Activated B cell treated with CpG ODN at 0.5 μM for 24 hours (primary cell): ENCODE measurements at regions of chr6 and their contacts with region 1.

Region 1: DNA sequence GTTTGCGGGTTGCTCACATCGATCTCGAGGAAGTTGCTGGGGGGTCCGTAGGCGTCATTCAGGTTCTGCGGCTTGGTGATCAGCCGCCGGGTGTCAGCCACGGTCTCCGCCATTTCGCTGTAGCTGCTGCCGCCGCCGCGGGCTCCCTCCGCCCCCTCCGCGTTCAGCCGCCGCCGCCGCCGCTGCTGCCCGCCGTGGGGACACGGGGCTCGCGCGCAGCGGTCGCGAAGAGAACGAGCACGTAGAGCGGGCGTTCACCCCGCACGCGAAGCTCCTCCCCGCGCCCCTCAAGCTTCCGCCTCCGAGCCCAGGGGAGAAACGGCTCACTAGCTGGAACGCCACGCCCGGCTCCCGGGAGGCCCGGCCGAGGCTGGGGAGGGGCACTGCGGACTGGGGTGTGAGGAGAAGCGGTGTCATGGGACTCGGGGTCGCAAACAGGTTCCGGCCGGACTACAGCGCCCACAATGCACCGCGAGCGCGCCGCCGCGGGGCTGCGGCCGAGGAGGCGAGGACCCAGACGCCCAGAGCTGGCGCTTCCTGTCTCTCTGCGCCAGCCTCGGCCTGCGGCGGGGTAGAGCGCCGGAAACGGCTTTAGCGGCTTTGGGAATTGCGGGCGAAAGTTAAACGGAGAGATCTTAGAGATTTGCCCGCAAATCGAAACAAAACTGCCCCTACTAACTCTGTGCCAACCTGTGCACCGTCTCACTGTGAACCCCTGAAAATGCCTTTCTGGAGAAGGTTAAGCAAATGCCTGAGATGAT is at the start of gene SNX3:
- DNase-seq: peak; percentile 98
- ATAC-seq: peak; percentile 92
- H3K4me3 Mint-ChIP-seq: peak within 1 kb of the TSS; percentile 93
- H3K27ac Mint-ChIP-seq: peak within 1 kb of the TSS; percentile 98
- H3K4me1 Mint-ChIP-seq: peaks cover 43% of the 10 kb centered on the region
- H3K27me3 Mint-ChIP-seq: no peaks in the 10 kb centered on the region
- CTCF ChIP-seq: no peak
- total RNA-seq, gene SNX3: 121 and 133 TPM in 2 replicates

Region 2: GRCh38 chr6:107459283-107460082 is 801.5 kb before region 1 on chr6 and contains the start of gene PDSS2:
- CTCF ChIA-PET with region 1: no interaction called
- POLR2A ChIA-PET with region 1: interaction called, 5 read pairs
- intact Hi-C with region 1: loop called (anchors 1 kb)
- DNase-seq: peak; percentile 95
- ATAC-seq: peak; percentile 96
- H3K4me3 Mint-ChIP-seq: peak within 1 kb of the TSS; percentile 95
- H3K27ac Mint-ChIP-seq: peak within 1 kb of the TSS; percentile 90
- H3K4me1 Mint-ChIP-seq: peaks cover 16% of the 10 kb centered on the region
- H3K27me3 Mint-ChIP-seq: no peaks in the 10 kb centered on the region
- CTCF ChIP-seq: no peak
- total RNA-seq, gene PDSS2: 14.6 and 19.3 TPM in 2 replicates

Region 3: DNA sequence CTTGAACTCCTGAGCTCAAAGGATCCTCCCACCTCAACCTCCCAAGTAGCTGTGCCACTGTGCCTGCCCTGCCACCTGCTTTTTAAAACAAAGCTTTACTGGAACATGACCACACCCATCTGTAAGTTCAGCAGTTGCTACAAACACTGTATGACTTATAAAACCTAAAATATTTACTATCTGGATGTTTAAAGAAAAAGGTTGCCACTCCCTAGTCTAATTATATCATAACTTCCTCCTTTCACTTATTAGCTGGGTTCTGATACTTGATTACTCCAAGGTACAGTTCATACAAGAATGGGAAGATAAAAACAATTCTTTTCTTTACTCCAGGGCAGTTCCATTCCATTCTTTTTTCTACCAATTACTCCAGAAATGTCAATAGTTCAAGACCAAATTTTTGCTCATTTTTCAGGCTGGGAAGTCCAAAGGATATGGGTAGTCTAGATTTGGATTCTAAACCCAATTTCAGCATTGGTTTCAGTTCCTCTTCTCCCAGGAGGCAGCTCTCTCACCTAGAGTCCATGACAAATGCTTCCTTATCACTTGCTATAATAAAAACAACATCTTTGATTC is 366.1 kb before region 1 on chr6:
- CTCF ChIA-PET with region 1: no interaction called
- POLR2A ChIA-PET with region 1: no interaction called
- intact Hi-C with region 1: no loop called
- DNase-seq: no peak
- ATAC-seq: peak; percentile 75
- H3K4me3 Mint-ChIP-seq: peak overlapping the region; percentile 61
- H3K27ac Mint-ChIP-seq: peak overlapping the region; percentile 92
- H3K4me1 Mint-ChIP-seq: peaks cover 60% of the 10 kb centered on the region
- H3K27me3 Mint-ChIP-seq: no peaks in the 10 kb centered on the region
- CTCF ChIP-seq: no peak

Region 4: GRCh38 chr6:108113557-108114519 is 147.2 kb before region 1 on chr6:
- CTCF ChIA-PET with region 1: no interaction called
- POLR2A ChIA-PET with region 1: no interaction called
- intact Hi-C with region 1: loop called (anchors 2 kb)
- DNase-seq: peak; percentile 25
- ATAC-seq: no peak
- H3K4me3 Mint-ChIP-seq: peak overlapping the region; percentile 79
- H3K27ac Mint-ChIP-seq: no peak overlapping the region
- H3K4me1 Mint-ChIP-seq: peaks cover 47% of the 10 kb centered on the region
- H3K27me3 Mint-ChIP-seq: peaks cover 67% of the 10 kb centered on the region
- CTCF ChIP-seq: no peak

Region 5: GRCh38 chr6:108286366-108286765 is 25.4 kb after region 1 on chr6:
- CTCF ChIA-PET with region 1: no interaction called
- POLR2A ChIA-PET with region 1: interaction called, 11 read pairs
- intact Hi-C with region 1: no loop called
- DNase-seq: no peak
- ATAC-seq: no peak
- H3K4me3 Mint-ChIP-seq: no peak overlapping the region
- H3K27ac Mint-ChIP-seq: no peak overlapping the region
- H3K4me1 Mint-ChIP-seq: peaks cover 8% of the 10 kb centered on the region
- H3K27me3 Mint-ChIP-seq: no peaks in the 10 kb centered on the region
- CTCF ChIP-seq: no peak

Region 6: DNA sequence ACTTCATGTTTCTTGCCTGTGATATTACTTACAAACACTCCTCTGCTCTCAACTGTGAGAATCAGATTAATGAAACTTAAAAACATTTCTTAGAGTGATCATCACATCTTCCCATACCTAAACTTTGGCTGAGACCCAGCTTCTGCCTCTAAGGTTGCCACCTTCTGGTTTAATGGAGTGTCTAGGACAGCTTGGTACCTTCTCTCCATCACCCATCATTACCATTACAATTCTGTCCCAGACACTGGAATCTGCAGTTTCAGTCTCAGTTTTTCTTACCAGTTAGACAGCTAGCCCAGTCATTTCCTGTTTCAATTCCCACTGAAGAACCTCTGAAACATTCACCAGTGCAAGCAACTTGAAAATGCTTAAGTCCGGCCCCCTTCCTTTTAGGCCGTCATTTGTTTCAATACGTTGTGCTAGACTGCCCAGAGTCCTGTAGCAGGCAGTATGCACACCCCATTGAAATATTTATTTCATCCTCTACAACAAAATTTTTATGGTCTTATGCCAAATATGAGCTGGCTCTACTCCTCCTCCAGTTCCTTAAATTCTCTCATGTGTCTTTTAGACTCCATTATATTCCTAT is 192.7 kb after region 1 on chr6:
- CTCF ChIA-PET with region 1: interaction called, 7 read pairs
- POLR2A ChIA-PET with region 1: no interaction called
- intact Hi-C with region 1: loop called (anchors 2 kb)
- DNase-seq: no peak
- ATAC-seq: peak; percentile 73
- H3K4me3 Mint-ChIP-seq: peak overlapping the region; percentile 32
- H3K27ac Mint-ChIP-seq: peak overlapping the region; percentile 70
- H3K4me1 Mint-ChIP-seq: peaks cover 8% of the 10 kb centered on the region
- H3K27me3 Mint-ChIP-seq: no peaks in the 10 kb centered on the region
- CTCF ChIP-seq: no peak

Region 7: GRCh38 chr6:108622641-108623298 is 361.8 kb after region 1 on chr6:
- CTCF ChIA-PET with region 1: no interaction called
- POLR2A ChIA-PET with region 1: no interaction called
- intact Hi-C with region 1: no loop called
- DNase-seq: no peak
- ATAC-seq: no peak
- H3K4me3 Mint-ChIP-seq: no peak overlapping the region
- H3K27ac Mint-ChIP-seq: no peak overlapping the region
- H3K4me1 Mint-ChIP-seq: peaks cover 56% of the 10 kb centered on the region
- H3K27me3 Mint-ChIP-seq: no peaks in the 10 kb centered on the region
- CTCF ChIP-seq: no peak

Region 8: DNA sequence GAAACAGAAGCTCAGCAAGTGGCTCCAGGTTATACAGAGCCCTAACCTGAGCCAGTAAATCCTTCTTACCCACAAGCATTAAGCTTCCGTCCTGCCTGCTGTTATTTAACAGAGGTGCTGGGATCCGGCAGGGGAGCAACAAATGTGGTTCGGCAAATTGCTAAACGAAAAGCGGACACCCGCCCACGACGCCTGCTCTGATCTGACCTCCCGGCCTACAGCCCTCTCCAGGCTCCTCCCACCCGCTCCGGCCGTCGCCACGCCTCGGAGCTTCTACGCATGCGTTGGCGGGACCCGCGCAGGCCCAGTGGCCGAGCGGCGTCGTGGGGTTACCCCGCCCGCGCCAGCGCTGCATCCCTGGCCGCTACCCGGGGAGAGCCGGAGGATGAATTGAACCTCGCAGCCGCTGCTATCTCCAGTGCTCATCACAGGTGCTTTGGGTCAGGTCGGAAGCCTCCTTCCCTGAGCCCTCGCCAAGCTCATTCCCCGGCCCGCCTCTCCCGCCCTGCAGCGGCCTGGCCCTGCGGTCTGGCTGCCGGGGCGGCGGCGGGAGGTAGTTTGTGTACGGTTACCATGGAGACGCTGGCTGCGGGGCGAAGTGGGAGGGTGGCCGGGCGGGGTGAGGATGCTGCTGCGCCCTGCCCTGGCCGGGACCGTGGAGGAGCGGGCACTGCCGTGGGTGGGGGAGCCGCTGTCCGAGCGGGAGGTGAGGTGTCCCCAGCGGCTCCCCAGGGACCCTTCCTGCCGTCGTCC is 587.3 kb after region 1 on chr6 and contains the start of gene ARMC2:
- CTCF ChIA-PET with region 1: no interaction called
- POLR2A ChIA-PET with region 1: no interaction called
- intact Hi-C with region 1: loop called (anchors 5 kb)
- DNase-seq: peak; percentile 98
- ATAC-seq: peak; percentile 94
- H3K4me3 Mint-ChIP-seq: peak within 1 kb of the TSS; percentile 86
- H3K27ac Mint-ChIP-seq: peak within 1 kb of the TSS; percentile 83
- H3K4me1 Mint-ChIP-seq: peaks cover 14% of the 10 kb centered on the region
- H3K27me3 Mint-ChIP-seq: peaks cover under 1% of the 10 kb centered on the region
- CTCF ChIP-seq: no peak
- total RNA-seq, gene ARMC2: 3.5 and 4.3 TPM in 2 replicates

Region 9: GRCh38 chr6:110063594-110064263 is 1802.7 kb after region 1 on chr6:
- CTCF ChIA-PET with region 1: no interaction called
- POLR2A ChIA-PET with region 1: no interaction called
- intact Hi-C with region 1: no loop called
- DNase-seq: no peak
- ATAC-seq: no peak
- H3K4me3 Mint-ChIP-seq: no peak overlapping the region
- H3K27ac Mint-ChIP-seq: no peak overlapping the region
- H3K4me1 Mint-ChIP-seq: peaks cover 19% of the 10 kb centered on the region
- H3K27me3 Mint-ChIP-seq: peaks cover 18% of the 10 kb centered on the region
- CTCF ChIP-seq: no peak